MCF 10A (cell line): ENCODE measurements at regions of chr9 and their contacts with region 1.

Region 1: GRCh38 chr9:76761448-76761847 is 2.8 kb upstream of the PCA3 start:
- DNase-seq: peak; percentile 10
- H3K4me3 Mint-ChIP-seq: no peak overlapping the region
- H3K27ac Mint-ChIP-seq: no peak overlapping the region
- H3K4me1 Mint-ChIP-seq: peaks cover 7% of the 10 kb centered on the region
- H3K27me3 Mint-ChIP-seq: no peaks in the 10 kb centered on the region
- CTCF ChIP-seq: peak; percentile 32

Region 2: GRCh38 chr9:76738402-76738801 is 23.0 kb before region 1 on chr9:
- CTCF ChIA-PET with region 1: no interaction called
- POLR2A ChIA-PET with region 1: no interaction called
- intact Hi-C with region 1: no loop called
- DNase-seq: no peak
- H3K4me3 Mint-ChIP-seq: no peak overlapping the region
- H3K27ac Mint-ChIP-seq: no peak overlapping the region
- H3K4me1 Mint-ChIP-seq: no peaks in the 10 kb centered on the region
- H3K27me3 Mint-ChIP-seq: no peaks in the 10 kb centered on the region
- CTCF ChIP-seq: no peak

Region 3: DNA sequence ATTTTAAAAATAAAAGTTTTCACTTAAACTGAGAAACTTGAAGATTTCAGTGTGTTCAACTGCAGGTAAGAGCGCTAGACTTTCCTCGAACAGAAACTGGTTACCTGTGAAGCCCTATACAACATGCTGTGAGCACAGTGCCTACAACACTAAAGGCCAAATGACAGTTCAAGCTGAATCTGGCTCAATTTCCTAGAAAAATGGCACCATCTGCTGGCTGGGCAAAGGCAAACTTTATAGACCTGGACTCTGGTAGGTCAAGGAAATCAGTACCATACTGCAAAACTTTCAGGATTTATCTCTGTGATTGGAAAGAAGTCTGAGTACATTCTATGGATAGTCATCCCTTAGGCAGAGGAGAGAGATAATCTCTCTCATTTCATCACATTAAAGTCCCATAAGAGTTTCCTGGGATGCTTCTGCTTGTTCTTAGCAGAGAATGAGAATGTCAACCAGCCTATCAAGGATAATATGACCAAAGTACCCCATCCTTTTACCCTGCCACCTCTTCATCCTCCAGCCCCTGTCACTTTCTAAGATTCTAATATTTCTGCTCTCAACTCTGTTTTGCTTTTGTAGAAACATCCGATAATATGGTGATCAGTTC is 226.2 kb after region 1 on chr9:
- CTCF ChIA-PET with region 1: interaction called, 3 read pairs
- POLR2A ChIA-PET with region 1: no interaction called
- intact Hi-C with region 1: loop called (anchors 2 kb)
- DNase-seq: peak; percentile 68
- H3K4me3 Mint-ChIP-seq: no peak overlapping the region
- H3K27ac Mint-ChIP-seq: no peak overlapping the region
- H3K4me1 Mint-ChIP-seq: no peaks in the 10 kb centered on the region
- H3K27me3 Mint-ChIP-seq: peaks cover 33% of the 10 kb centered on the region
- CTCF ChIP-seq: peak; percentile 58